K562 (cell line): ENCODE measurements at regions of chr2 and their contacts with region 1.

Region 1: GRCh38 chr2:66434679-66435548 is at the start of gene MEIS1:
- DNase-seq: peak; percentile 74 to 91 (median 82)
- ATAC-seq: peak; percentile 90
- H3K4me3 ChIP-seq: peak within 1 kb of the TSS; percentile 50
- H3K27ac ChIP-seq: peak within 1 kb of the TSS; percentile 47
- H3K4me1 ChIP-seq: peaks cover 0 to 28% of the 10 kb centered on the region in 2 experiments; a peak in 3 of 5 replicates
- H3K27me3 ChIP-seq: no peaks in the 10 kb centered on the region
- CTCF ChIP-seq: no peak
- EP300 ChIP-seq: no peak
- POLR2A ChIP-seq: peak; percentile 82
- RAD21 ChIP-seq: no peak
- polyA plus RNA-seq, gene MEIS1: 2.3 to 6.7 TPM

Region 2: GRCh38 chr2:66481100-66481549 is 46.2 kb after region 1 on chr2:
- CTCF ChIA-PET with region 1: no interaction called
- POLR2A ChIA-PET with region 1: interaction called, 3 read pairs
- in situ Hi-C with region 1: no loop called
- intact Hi-C with region 1: loop called (anchors 5 kb)
- DNase-seq: peak; percentile 50 to 91 (median 68)
- ATAC-seq: peak; percentile 92
- H3K4me3 ChIP-seq: no peak overlapping the region
- H3K27ac ChIP-seq: peak overlapping the region; percentile 74
- H3K4me1 ChIP-seq: peaks cover 9 to 53% of the 10 kb centered on the region in 2 experiments; a peak in 4 of 5 replicates
- H3K27me3 ChIP-seq: no peaks in the 10 kb centered on the region
- CTCF ChIP-seq: no peak
- EP300 ChIP-seq: peak; percentile 91
- POLR2A ChIP-seq: no peak
- RAD21 ChIP-seq: peak; percentile 7 to 29; a peak in 2 of 4 replicates

Region 3: GRCh38 chr2:66495788-66496640 is 61.1 kb after region 1 on chr2:
- CTCF ChIA-PET with region 1: no interaction called
- POLR2A ChIA-PET with region 1: no interaction called
- in situ Hi-C with region 1: no loop called
- intact Hi-C with region 1: loop called (anchors 2 kb)
- DNase-seq: peak; percentile 61 to 76 (median 68)
- ATAC-seq: peak; percentile 90
- H3K4me3 ChIP-seq: no peak overlapping the region
- H3K27ac ChIP-seq: no peak overlapping the region
- H3K4me1 ChIP-seq: peaks cover 0 to 31% of the 10 kb centered on the region in 2 experiments; a peak in 3 of 5 replicates
- H3K27me3 ChIP-seq: no peaks in the 10 kb centered on the region
- CTCF ChIP-seq: peak; percentile 41 to 42 (median 41); a peak in 4 of 6 replicates
- EP300 ChIP-seq: no peak
- POLR2A ChIP-seq: no peak
- RAD21 ChIP-seq: peak; percentile 32 to 53; a peak in 3 of 4 replicates

Region 4: GRCh38 chr2:66915237-66915636 is 480.3 kb after region 1 on chr2:
- CTCF ChIA-PET with region 1: no interaction called
- POLR2A ChIA-PET with region 1: no interaction called
- in situ Hi-C with region 1: no loop called
- intact Hi-C with region 1: no loop called
- DNase-seq: no peak
- ATAC-seq: no peak
- H3K4me3 ChIP-seq: no peak overlapping the region
- H3K27ac ChIP-seq: no peak overlapping the region
- H3K4me1 ChIP-seq: no peaks in the 10 kb centered on the region
- H3K27me3 ChIP-seq: no peaks in the 10 kb centered on the region
- CTCF ChIP-seq: no peak
- EP300 ChIP-seq: no peak
- POLR2A ChIP-seq: no peak
- RAD21 ChIP-seq: no peak

Region 5: GRCh38 chr2:67476809-67477790 is 1042.2 kb after region 1 on chr2:
- CTCF ChIA-PET with region 1: no interaction called
- POLR2A ChIA-PET with region 1: no interaction called
- in situ Hi-C with region 1: no loop called
- intact Hi-C with region 1: loop called (anchors 10 kb)
- DNase-seq: peak in 3 of 4 experiments; percentile 11 to 18 (median 14)
- ATAC-seq: peak; percentile 71
- H3K4me3 ChIP-seq: no peak overlapping the region
- H3K27ac ChIP-seq: no peak overlapping the region
- H3K4me1 ChIP-seq: no peaks in the 10 kb centered on the region
- H3K27me3 ChIP-seq: no peaks in the 10 kb centered on the region
- CTCF ChIP-seq: peak in 2 of 3 experiments; percentile 52; a peak in 5 of 6 replicates
- EP300 ChIP-seq: no peak
- POLR2A ChIP-seq: no peak
- RAD21 ChIP-seq: peak; percentile 39 to 58; a peak in 3 of 4 replicates

Region 6: DNA sequence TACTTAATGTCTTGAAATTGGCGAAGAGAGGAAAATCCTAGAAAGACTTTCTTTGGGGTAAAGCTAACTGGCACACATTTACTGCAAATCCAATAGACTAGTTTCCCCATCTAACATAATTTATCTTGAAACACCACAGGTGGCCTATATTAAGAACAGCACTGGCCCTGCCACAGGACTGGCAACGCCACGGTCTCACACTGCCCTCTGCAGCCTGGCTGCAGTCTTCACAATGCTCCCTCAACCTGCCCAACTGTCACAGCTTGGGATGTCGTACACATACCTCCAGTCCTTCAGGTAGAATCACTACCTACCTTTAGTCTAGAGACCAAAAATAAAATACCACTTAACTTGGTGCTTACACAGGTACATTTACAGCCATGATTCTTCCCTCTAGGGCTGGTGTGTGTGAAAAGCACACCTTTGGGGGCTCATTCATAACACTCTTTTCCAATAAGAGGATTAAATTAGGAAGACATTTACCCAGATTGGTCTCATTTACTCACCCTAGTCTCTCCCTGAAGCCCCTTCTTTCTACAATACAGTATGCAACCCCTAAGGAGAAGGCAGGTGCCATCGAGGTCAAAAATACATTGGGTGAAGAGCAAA is 1405.7 kb after region 1 on chr2:
- CTCF ChIA-PET with region 1: no interaction called
- POLR2A ChIA-PET with region 1: no interaction called
- in situ Hi-C with region 1: no loop called
- intact Hi-C with region 1: loop called (anchors 5 kb)
- DNase-seq: peak; percentile 31 to 50 (median 34)
- ATAC-seq: peak; percentile 93
- H3K4me3 ChIP-seq: no peak overlapping the region
- H3K27ac ChIP-seq: no peak overlapping the region
- H3K4me1 ChIP-seq: no peaks in the 10 kb centered on the region
- H3K27me3 ChIP-seq: no peaks in the 10 kb centered on the region; a peak in 1 of 5 replicates
- CTCF ChIP-seq: peak; percentile 61 to 78 (median 73)
- EP300 ChIP-seq: no peak
- POLR2A ChIP-seq: no peak
- RAD21 ChIP-seq: peak; percentile 50 to 83